ENCODE measurements at regions of chr1 and their contacts with region 1.

Region 1: GRCh38 chr1:184982002-184982954 is 8.0 kb upstream of the NIBAN1 start:
- DNase-seq: peak; percentile 64
- H3K4me3 ChIP-seq: no peak overlapping the region
- H3K27ac ChIP-seq: no peak overlapping the region
- H3K4me1 ChIP-seq: no peaks in the 10 kb centered on the region
- H3K27me3 ChIP-seq: peaks cover 6 to 12% of the 10 kb centered on the region in 2 experiments
- CTCF ChIP-seq: peak; percentile 81 to 88
- POLR2A ChIP-seq: no peak

Region 2: DNA sequence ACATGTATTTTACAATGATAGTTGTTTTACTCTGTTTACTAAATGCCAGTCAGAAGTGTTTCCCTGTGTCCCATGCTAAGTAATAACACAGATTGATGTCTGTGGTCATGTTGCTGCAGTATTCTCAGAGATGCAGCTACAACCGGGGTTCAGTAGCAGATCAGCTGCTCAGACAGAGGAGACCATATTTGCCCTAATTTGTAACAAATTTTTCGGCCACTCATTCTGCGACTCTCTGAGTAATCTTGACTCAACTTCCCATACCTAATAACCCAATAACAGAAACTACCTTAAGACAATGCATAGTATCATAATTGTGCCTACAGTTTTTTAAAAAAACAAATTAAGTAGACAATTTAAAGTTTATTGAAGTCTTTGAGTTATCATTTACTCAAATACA is 40.5 kb before region 1 on chr1:
- CTCF ChIA-PET with region 1: no interaction called
- POLR2A ChIA-PET with region 1: no interaction called
- dilution Hi-C with region 1: no loop called
- intact Hi-C with region 1: no loop called
- DNase-seq: no peak
- H3K4me3 ChIP-seq: no peak overlapping the region
- H3K27ac ChIP-seq: no peak overlapping the region
- H3K4me1 ChIP-seq: no peaks in the 10 kb centered on the region
- H3K27me3 ChIP-seq: peaks cover 0 to 1% of the 10 kb centered on the region in 2 experiments
- CTCF ChIP-seq: no peak
- POLR2A ChIP-seq: no peak

Region 3: DNA sequence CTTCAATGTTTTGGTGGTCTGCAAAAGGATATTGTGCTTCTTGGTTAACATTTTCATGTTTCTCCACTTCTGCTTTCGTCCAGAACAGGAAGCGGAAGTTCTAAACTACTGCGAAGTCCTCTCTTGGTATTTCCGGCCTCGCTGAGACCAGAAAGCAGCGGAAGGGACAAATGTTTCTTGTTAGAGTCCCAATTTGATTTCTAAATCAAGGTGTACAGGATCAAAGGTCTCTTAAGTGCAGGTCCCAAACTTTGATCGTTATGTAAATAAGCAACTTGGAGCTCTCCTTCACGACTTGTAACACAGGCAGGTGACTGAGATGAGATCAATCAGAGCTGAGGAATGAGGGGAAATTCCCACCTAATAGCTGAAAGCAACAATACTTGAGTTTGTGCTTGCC is 711.8 kb after region 1 on chr1:
- CTCF ChIA-PET with region 1: no interaction called
- POLR2A ChIA-PET with region 1: no interaction called
- dilution Hi-C with region 1: no loop called
- intact Hi-C with region 1: loop called (anchors 10 kb)
- DNase-seq: peak; percentile 57
- H3K4me3 ChIP-seq: peak overlapping the region in 1 of 3 experiments; percentile 32
- H3K27ac ChIP-seq: peak overlapping the region; percentile 65
- H3K4me1 ChIP-seq: peaks cover 12% of the 10 kb centered on the region
- H3K27me3 ChIP-seq: no peaks in the 10 kb centered on the region
- CTCF ChIP-seq: no peak
- POLR2A ChIP-seq: no peak

Measured in endothelial cell of umbilical vein (primary cell).